ENCODE measurements at regions of chr13 and their contacts with region 1.

Region 1: DNA sequence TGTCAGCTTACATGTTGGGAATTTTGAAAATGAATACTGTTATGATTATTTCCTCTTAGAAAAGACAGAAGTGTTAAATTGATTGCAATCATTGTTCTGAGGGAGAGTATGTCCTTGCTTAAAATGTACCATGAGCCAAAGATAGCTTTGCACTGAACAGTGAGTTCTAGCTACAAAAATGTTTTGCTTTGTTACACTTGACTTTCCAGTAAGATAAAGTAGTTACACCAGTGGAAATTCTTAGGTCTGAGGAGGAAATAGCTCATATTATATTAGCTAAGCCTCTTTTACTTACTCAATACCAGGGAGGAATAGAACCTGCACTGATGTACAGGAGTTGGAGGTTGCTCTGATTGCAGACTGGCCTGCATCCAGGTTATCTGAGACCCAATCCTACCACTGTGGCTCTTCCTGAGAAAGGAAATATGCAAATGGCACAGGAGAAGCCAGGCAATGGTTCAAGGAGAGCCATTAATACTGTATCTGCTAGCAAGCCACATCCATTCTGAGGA is 53.0 kb upstream of the FBXL3 start:
- DNase-seq: no peak
- H3K4me3 ChIP-seq: no peak overlapping the region
- H3K27ac ChIP-seq: no peak overlapping the region
- H3K4me1 ChIP-seq: no peaks in the 10 kb centered on the region
- H3K27me3 ChIP-seq: no peaks in the 10 kb centered on the region
- CTCF ChIP-seq: no peak

Region 2: GRCh38 chr13:77062097-77062496 is 17.9 kb before region 1 on chr13:
- CTCF ChIA-PET with region 1: no interaction called
- POLR2A ChIA-PET with region 1: no interaction called
- intact Hi-C with region 1: loop called (anchors 2 kb)
- DNase-seq: no peak
- H3K4me3 ChIP-seq: no peak overlapping the region
- H3K27ac ChIP-seq: no peak overlapping the region
- H3K4me1 ChIP-seq: no peaks in the 10 kb centered on the region
- H3K27me3 ChIP-seq: no peaks in the 10 kb centered on the region
- CTCF ChIP-seq: no peak